ENCODE measurements at regions of chr13 and their contacts with region 1.

Region 1: DNA sequence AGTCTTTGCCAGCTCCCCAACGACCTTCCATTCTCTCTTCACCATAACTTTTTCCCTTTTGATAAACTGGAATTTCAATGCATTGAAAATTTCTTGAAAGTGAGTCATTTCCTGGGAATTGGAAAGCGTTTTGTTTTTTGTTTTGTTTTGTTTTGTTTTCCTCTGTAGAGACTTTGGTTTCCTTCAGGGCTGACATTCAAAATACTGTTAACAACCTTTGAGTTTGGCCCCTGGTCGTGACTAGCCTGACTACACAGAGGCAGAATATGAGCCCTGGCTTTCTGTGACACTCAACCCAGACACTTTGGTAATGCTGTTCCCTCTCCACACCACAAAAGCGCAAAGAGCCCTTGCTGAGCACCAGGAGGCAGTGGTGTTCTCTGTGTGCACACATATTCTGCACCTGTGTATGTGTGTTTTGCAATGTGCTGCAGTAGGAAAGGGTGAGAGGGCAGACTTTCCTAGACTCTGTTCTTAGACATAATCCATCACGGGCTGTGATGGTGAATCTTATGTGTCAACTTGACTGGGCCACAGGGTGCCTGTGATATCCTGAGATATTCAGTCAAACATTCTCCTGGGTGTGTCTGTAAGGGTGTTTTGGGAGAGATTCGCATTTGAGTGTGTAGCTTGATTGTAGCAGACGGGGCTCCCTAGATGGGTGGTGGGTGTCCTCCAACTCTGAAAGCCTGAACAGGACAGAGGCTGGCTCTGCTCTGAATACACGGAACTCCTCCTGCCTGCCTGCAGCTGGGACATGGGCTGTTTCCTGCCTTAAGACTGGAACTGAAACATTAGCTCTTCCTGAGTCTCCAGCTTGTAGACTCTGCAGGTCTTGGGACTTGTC is 29.5 kb upstream of the ANKRD10 start:
- DNase-seq: peak; percentile 64
- H3K4me3 ChIP-seq: no peak overlapping the region
- H3K27ac ChIP-seq: no peak overlapping the region
- H3K4me1 ChIP-seq: peaks cover 10% of the 10 kb centered on the region
- H3K27me3 ChIP-seq: no peaks in the 10 kb centered on the region
- CTCF ChIP-seq: peak; percentile 78 to 92

Region 2: GRCh38 chr13:110875241-110875640 is 69.1 kb before region 1 on chr13:
- CTCF ChIA-PET with region 1: no interaction called
- dilution Hi-C with region 1: loop called (anchors 5 kb)
- in situ Hi-C with region 1: no loop called
- intact Hi-C with region 1: no loop called
- DNase-seq: no peak
- H3K4me3 ChIP-seq: peak overlapping the region in 1 of 3 experiments; percentile 11
- H3K27ac ChIP-seq: no peak overlapping the region
- H3K4me1 ChIP-seq: peaks cover 8% of the 10 kb centered on the region
- H3K27me3 ChIP-seq: no peaks in the 10 kb centered on the region
- CTCF ChIP-seq: no peak

Region 3: DNA sequence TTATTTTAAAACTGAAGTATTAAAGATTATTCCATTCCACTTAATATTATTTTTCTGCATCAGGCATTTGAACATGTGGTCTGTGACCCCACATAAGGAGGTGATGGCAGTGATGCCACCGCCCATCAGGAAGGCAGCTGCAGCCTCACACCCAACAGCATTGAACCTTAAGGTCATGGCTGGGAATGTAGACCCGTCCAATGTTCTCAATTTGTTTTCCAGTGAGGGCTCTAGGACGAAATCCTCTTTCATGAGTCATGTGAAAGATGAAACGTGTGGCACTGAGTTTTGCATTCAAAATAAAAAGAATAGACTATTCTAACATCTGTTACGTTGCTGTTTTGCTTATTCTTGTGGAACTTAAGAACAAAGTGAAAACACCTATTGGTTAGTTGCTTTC is 45.0 kb after region 1 on chr13:
- CTCF ChIA-PET with region 1: no interaction called
- dilution Hi-C with region 1: no loop called
- in situ Hi-C with region 1: no loop called
- intact Hi-C with region 1: no loop called
- DNase-seq: no peak
- H3K4me3 ChIP-seq: no peak overlapping the region
- H3K27ac ChIP-seq: no peak overlapping the region
- H3K4me1 ChIP-seq: no peaks in the 10 kb centered on the region
- H3K27me3 ChIP-seq: peaks cover 2% of the 10 kb centered on the region
- CTCF ChIP-seq: no peak

Region 4: DNA sequence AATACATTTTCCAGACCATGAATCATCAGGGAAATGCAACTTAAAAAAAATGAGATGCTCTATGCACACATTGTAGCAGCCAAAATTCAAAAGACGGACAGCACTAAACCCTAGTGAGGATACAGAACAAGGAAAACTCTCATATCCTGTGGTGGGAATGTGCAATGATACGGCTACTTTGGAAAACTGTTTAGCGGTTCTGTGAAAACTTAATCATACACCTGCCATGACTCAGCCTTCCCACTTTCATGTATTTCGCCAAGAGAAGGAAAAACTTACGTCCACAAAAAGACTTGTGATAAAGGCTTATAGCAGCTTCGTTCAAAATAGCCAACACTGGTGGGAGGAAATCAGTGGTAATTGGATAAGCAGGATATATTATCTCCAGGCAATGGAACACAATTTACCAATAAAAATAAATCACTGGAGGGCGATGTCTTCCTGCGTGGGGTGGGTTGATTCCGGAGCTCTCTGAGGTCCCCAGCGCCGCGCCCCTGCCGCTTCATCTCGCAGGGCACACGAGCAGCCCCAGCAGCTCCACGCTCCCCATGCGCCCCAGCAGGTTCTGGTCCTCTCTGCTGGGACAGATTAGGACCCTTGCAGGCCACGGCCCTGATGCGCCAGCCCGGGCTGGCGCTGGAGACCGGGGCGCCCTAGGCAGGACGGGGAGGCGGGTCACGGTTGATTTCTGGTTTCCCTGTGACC is 73.6 kb after region 1 on chr13:
- CTCF ChIA-PET with region 1: no interaction called
- dilution Hi-C with region 1: no loop called
- in situ Hi-C with region 1: no loop called
- intact Hi-C with region 1: no loop called
- DNase-seq: no peak
- H3K4me3 ChIP-seq: no peak overlapping the region
- H3K27ac ChIP-seq: no peak overlapping the region
- H3K4me1 ChIP-seq: no peaks in the 10 kb centered on the region
- H3K27me3 ChIP-seq: no peaks in the 10 kb centered on the region
- CTCF ChIP-seq: no peak

Region 5: GRCh38 chr13:111031531-111031961 is 87.2 kb after region 1 on chr13:
- CTCF ChIA-PET with region 1: no interaction called
- dilution Hi-C with region 1: loop called (anchors 5 kb)
- in situ Hi-C with region 1: loop called in 1 of 2 experiments (anchors 10 kb)
- intact Hi-C with region 1: no loop called
- DNase-seq: peak; percentile 78
- H3K4me3 ChIP-seq: no peak overlapping the region
- H3K27ac ChIP-seq: no peak overlapping the region
- H3K4me1 ChIP-seq: peaks cover 31% of the 10 kb centered on the region
- H3K27me3 ChIP-seq: no peaks in the 10 kb centered on the region
- CTCF ChIP-seq: no peak

Region 6: GRCh38 chr13:111049802-111050538 is 105.6 kb after region 1 on chr13:
- CTCF ChIA-PET with region 1: no interaction called
- dilution Hi-C with region 1: no loop called
- in situ Hi-C with region 1: loop called in 1 of 2 experiments (anchors 10 kb)
- intact Hi-C with region 1: loop called (anchors 1 kb)
- DNase-seq: no peak
- H3K4me3 ChIP-seq: no peak overlapping the region
- H3K27ac ChIP-seq: no peak overlapping the region
- H3K4me1 ChIP-seq: no peaks in the 10 kb centered on the region
- H3K27me3 ChIP-seq: no peaks in the 10 kb centered on the region
- CTCF ChIP-seq: peak; percentile 30 to 56

Region 7: DNA sequence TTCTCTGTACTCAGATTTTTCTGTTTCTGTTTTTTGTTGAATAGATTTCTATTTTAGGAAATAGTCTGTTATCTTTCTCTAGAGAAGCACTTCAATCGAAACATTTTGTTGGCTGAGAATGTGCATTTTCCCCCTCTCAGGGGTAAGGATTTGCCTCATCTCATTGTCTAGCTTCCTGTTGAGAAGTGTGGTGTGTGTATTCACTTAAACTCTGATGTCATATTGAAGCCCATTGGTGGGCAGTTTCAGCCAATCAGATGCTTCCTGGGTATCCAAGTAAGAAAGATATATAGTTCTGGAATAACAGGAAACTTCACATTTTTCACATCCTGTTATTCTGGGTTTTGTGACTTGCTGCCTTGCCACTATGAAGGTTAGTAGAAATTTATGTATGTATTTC is 258.4 kb after region 1 on chr13:
- CTCF ChIA-PET with region 1: no interaction called
- dilution Hi-C with region 1: no loop called
- in situ Hi-C with region 1: loop called in 1 of 2 experiments (anchors 25 kb)
- intact Hi-C with region 1: no loop called
- DNase-seq: no peak
- H3K4me3 ChIP-seq: no peak overlapping the region
- H3K27ac ChIP-seq: no peak overlapping the region
- H3K4me1 ChIP-seq: peaks cover 8% of the 10 kb centered on the region
- H3K27me3 ChIP-seq: no peaks in the 10 kb centered on the region
- CTCF ChIP-seq: no peak

Region 8: DNA sequence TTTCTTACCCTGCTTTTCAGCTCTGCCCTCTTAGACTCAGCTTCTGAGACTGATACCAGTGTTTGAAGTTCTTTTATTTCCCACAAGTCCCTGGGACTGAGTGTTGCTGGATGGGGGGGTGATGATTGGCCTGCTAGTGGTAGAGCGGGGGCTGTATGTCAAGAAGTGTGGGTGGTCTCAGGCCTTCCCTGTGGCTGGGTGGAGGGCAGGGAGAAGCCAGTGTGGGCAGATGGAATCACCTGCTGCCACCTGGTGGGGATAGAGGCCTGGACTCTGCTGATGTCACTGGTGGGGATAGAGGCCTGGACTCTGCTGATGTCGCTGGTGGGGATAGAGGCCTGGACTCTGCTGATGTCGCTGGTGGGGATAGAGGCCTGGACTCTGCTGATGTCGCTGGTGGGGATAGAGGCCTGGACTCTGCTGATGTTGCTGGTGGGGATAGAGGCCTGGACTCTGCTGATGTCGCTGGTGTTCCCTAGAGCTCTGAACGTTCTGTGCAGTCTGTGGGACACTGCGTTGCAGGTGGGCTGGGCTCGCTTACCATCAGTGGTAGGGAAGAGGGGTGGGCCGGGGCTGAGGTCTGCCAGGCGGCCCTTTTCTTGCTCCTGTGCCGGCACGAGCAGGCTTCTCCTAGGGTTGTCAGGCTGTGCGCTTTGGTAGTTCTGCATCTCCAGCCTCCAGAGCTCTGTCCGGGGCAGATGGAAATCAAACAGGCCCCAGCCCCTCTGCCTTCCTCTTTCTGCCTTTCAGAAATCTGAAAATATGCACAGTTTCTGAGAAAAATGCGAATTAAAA is 272.0 kb after region 1 on chr13:
- CTCF ChIA-PET with region 1: no interaction called
- dilution Hi-C with region 1: no loop called
- in situ Hi-C with region 1: loop called in 1 of 2 experiments (anchors 25 kb)
- intact Hi-C with region 1: loop called (anchors 5 kb)
- DNase-seq: no peak
- H3K4me3 ChIP-seq: no peak overlapping the region
- H3K27ac ChIP-seq: no peak overlapping the region
- H3K4me1 ChIP-seq: no peaks in the 10 kb centered on the region
- H3K27me3 ChIP-seq: no peaks in the 10 kb centered on the region
- CTCF ChIP-seq: peak; percentile 36 to 64

Measured in mammary epithelial cell (primary cell).